Activated T-helper 2 cell treated with anti-CD3 and anti-CD28 coated beads, Interferon-gamma antibody, Interleukin-2, Interleukin-4, amounts not matched to agents 10 μg/mL and 5 μg/mL and 100 μg/mL, durations not matched to agents 14 hours and 24 hours and 36 hours (primary cell): ENCODE measurements at regions of chr6 and their contacts with region 1.

Region 1: DNA sequence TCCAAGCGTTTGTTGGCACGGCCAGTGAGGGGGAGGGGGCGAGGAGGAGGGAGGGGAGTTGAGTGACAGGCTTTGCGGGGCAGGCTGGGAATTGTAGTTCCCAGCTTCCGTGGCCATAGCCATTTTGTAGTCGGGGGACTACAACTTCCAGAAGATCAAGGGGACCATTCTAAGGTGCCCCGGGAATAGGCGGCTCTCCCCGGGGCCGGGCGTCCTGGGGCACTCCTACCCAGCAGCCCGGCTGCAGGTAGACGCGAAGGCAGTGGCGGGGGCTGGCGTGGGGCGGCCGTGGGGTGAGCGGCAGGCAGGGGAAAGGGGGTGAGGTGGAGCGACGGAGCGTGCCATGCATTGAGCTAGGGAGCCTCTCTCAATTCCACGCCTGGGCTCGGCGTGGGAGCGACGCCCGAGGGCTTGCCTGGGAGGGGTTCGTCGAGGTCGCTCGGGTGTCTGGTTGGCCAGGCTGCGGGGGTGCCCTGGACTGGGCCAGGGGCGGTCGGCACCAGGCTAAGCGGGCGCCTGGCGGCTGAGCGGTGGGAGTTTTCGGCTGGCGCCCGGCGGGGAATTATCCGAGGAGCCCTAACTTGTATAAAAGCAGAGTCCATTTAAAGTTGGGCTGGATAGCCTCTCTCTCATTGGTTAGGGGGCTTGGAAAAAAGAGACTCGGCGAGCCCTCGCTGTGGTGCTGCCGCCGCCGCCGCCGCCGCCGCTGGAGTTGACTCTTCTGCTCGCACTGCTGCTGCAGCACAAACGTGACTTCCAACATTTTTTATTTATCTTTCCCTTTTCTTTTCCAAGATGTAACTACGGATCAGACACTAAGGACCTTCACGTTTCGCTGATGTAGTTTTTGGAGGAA is at the start of gene JARID2:
- DNase-seq: peak; percentile 93
- H3K4me3 Mint-ChIP-seq: peak within 1 kb of the TSS; percentile 99
- H3K27ac Mint-ChIP-seq: peak within 1 kb of the TSS; percentile 99
- H3K4me1 Mint-ChIP-seq: peaks cover 30% of the 10 kb centered on the region
- H3K27me3 Mint-ChIP-seq: no peaks in the 10 kb centered on the region
- total RNA-seq, gene JARID2: 55.9 and 57.7 TPM in 2 replicates

Region 2: DNA sequence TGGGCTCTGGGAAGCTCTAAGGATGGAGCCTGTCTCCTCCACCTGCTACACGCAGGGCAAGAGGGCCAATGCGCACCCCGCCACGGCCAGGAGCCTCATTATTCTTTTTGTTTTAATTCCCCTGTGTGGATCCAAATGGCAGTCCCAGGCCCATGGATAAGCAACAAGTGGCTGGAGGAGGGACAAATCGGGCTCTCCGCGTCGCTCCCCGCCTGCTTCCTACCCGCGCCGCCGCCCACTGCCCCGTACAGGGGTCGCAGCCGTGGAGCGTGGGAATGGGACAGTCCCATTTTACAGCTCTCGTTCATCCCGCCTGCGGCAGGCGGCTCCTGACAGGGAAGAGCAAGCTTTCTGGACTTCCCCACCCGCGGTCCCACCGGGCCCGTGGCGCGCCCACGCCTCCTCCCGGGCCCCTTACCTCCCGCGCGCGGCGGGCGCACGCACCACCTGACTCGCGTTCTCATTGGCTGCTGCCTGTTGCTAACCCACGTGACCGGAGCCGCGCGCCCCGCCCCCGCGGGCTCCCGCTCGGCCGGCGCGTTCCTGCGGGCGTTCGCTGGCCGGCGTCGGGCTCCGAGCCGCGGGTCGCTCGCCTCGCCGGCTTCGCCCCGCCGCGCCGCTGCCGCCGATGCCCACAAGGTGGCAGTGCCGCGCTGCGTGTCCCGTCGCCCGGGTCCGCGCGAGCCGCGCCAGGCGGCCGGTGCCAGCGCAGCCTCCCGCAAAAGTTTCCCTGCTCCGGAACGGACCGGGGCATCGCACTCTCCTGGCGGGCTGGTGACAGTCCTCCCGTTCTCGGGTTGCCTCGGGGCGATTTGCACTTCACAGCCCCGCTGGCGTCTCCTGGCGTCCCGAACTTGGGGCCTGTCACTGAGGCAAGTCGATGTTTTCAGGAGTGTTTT is 1034.7 kb before region 1 on chr6:
- intact Hi-C with region 1: loop called (anchors 2 kb)
- DNase-seq: peak; percentile 92
- H3K4me3 Mint-ChIP-seq: peak overlapping the region; percentile 78
- H3K27ac Mint-ChIP-seq: peak overlapping the region; percentile 83
- H3K4me1 Mint-ChIP-seq: peaks cover 40% of the 10 kb centered on the region
- H3K27me3 Mint-ChIP-seq: no peaks in the 10 kb centered on the region

Region 3: DNA sequence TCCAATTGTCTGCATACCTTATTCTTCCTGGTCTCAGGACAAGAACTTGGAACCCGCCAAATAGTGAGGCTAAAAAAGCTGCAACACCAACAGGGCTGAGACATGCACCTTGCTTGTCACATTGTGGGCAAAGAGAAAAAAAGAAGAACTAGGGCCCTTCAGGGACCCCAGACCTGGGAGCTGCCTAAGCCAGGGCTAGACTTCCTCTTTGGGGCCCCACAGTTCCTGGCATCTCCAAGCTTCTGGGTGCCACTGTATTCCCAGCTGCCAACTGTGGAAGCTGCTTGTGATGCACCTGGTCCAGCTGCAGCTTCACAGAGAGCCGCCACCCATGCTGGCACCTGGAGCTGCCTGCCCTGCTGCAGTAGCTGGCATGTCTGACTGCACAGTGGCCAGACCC is 757.4 kb before region 1 on chr6:
- intact Hi-C with region 1: no loop called
- DNase-seq: no peak
- H3K4me3 Mint-ChIP-seq: no peak overlapping the region
- H3K27ac Mint-ChIP-seq: no peak overlapping the region
- H3K4me1 Mint-ChIP-seq: peaks cover 1% of the 10 kb centered on the region
- H3K27me3 Mint-ChIP-seq: no peaks in the 10 kb centered on the region

Region 4: GRCh38 chr6:14660806-14661579 is 584.6 kb before region 1 on chr6:
- intact Hi-C with region 1: loop called (anchors 5 kb)
- DNase-seq: peak; percentile 52
- H3K4me3 Mint-ChIP-seq: no peak overlapping the region
- H3K27ac Mint-ChIP-seq: no peak overlapping the region
- H3K4me1 Mint-ChIP-seq: peaks cover 35% of the 10 kb centered on the region
- H3K27me3 Mint-ChIP-seq: no peaks in the 10 kb centered on the region

Region 5: GRCh38 chr6:14857501-14857900 is 388.1 kb before region 1 on chr6:
- intact Hi-C with region 1: loop called (anchors 1 kb)
- DNase-seq: peak; percentile 18
- H3K4me3 Mint-ChIP-seq: peak overlapping the region; percentile 19
- H3K27ac Mint-ChIP-seq: peak overlapping the region; percentile 92
- H3K4me1 Mint-ChIP-seq: peaks cover 46% of the 10 kb centered on the region
- H3K27me3 Mint-ChIP-seq: no peaks in the 10 kb centered on the region

Region 6: DNA sequence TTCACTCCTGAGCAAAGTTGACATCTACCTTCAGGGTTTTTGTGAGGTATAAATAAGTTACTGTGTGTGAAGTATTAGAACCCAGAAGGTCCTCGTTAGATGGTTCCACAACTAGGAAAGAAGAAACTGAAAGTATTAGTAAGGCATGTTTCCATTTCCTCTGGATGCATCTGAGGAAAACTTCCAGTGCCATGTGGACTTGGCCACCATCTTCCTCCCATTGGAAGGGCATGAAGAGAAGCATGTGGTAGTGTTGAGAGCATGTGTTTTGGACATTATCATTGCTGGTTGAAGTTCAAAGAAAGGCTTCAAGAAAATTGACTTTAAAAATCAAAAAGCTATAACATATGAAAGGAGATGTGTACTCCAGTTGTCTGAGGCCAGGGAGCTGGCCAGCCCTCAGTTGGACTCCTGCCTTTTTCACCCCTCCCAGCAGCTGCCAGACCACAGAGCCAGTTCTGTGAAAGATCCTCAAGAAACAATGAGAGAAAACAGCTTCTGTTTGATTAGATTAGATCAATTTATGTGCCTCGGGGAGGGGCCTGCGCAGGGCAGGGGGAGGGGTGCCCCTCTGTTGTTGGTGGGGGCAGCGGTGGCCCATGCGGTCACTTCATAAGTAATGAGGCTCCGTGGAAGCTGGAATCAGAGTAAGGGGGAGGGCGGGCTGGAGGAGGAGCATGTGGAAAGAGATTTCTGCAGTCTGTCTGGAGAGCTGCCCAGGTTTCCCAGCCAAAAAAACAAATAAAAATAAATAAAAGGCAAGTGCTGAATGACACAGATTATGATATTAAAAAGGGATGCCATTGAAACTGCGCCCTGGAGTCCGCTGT is 154.3 kb after region 1 on chr6:
- intact Hi-C with region 1: loop called (anchors 5 kb)
- DNase-seq: no peak
- H3K4me3 Mint-ChIP-seq: peak overlapping the region; percentile 80
- H3K27ac Mint-ChIP-seq: peak overlapping the region; percentile 66
- H3K4me1 Mint-ChIP-seq: peaks cover 79% of the 10 kb centered on the region
- H3K27me3 Mint-ChIP-seq: no peaks in the 10 kb centered on the region

Region 7: GRCh38 chr6:15491255-15491985 is 245.8 kb after region 1 on chr6:
- intact Hi-C with region 1: loop called (anchors 5 kb)
- DNase-seq: peak; percentile 60
- H3K4me3 Mint-ChIP-seq: no peak overlapping the region
- H3K27ac Mint-ChIP-seq: peak overlapping the region; percentile 62
- H3K4me1 Mint-ChIP-seq: peaks cover 35% of the 10 kb centered on the region
- H3K27me3 Mint-ChIP-seq: no peaks in the 10 kb centered on the region